Endothelial cell of umbilical vein (primary cell): ENCODE measurements at regions of chr19 and their contacts with region 1.

Region 1: GRCh38 chr19:12766051-12766521 is 9.3 kb downstream of the HOOK2 start:
- DNase-seq: peak; percentile 88
- H3K4me3 ChIP-seq: peak overlapping the region in 2 of 3 experiments; percentile 34 to 44
- H3K27ac ChIP-seq: no peak overlapping the region
- H3K4me1 ChIP-seq: no peaks in the 10 kb centered on the region
- H3K27me3 ChIP-seq: no peaks in the 10 kb centered on the region
- CTCF ChIP-seq: peak; percentile 32 to 95
- POLR2A ChIP-seq: no peak

Region 2: DNA sequence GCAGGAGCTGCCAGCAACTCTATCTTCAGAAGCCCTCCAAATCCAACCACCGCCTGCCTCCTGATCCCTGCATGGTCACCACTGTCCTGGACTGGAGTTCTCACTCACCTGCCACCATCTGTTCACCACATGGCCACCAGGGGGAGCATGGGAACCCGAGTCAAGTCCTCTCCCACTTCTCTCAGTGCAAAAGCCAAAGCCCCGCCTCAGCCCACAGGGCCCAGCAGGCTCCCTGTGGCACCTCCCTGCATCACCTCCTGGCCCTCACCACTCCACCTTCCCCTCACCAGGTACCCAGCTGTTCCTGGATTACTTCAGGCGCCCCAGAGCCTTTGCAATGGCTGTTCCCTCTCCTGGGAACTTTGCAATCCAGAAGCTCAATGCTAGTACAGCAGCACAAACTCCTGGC is 89.7 kb before region 1 on chr19:
- CTCF ChIA-PET with region 1: no interaction called
- POLR2A ChIA-PET with region 1: no interaction called
- dilution Hi-C with region 1: no loop called
- intact Hi-C with region 1: no loop called
- DNase-seq: peak; percentile 60
- H3K4me3 ChIP-seq: no peak overlapping the region
- H3K27ac ChIP-seq: no peak overlapping the region
- H3K4me1 ChIP-seq: no peaks in the 10 kb centered on the region
- H3K27me3 ChIP-seq: no peaks in the 10 kb centered on the region
- CTCF ChIP-seq: peak; percentile 85 to 90
- POLR2A ChIP-seq: no peak

Region 3: DNA sequence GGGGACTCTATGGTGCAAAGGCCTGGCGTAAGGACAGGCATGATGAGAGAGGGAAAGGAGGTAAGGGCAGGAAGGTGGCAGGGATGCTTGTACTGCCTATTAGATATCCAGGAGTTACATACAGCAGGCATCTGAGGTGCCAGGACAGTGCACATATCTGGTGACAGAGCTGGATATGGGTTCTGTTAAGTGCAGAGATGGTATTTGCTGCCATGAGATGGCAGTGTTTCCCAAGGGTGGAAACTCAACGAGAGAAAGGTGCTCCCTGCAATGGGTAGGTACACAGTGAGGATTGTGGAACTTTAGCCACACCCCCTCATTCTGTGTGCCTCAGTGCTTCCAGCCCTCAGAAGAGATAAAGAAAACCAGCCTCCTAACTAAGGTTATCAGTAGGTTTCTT is 49.2 kb before region 1 on chr19:
- CTCF ChIA-PET with region 1: interaction called, 19 read pairs
- POLR2A ChIA-PET with region 1: no interaction called
- dilution Hi-C with region 1: no loop called
- intact Hi-C with region 1: no loop called
- DNase-seq: peak; percentile 48
- H3K4me3 ChIP-seq: no peak overlapping the region
- H3K27ac ChIP-seq: no peak overlapping the region
- H3K4me1 ChIP-seq: peaks cover 6% of the 10 kb centered on the region
- H3K27me3 ChIP-seq: no peaks in the 10 kb centered on the region
- CTCF ChIP-seq: peak; percentile 21 to 51
- POLR2A ChIP-seq: no peak

Region 4: GRCh38 chr19:12736995-12737834 is 28.9 kb before region 1 on chr19 and contains the start of gene GET3:
- CTCF ChIA-PET with region 1: interaction called, 11 read pairs
- POLR2A ChIA-PET with region 1: no interaction called
- dilution Hi-C with region 1: no loop called
- intact Hi-C with region 1: no loop called
- DNase-seq: peak; percentile 100
- H3K4me3 ChIP-seq: peak within 1 kb of the TSS; percentile 64 to 99 (median 69)
- H3K27ac ChIP-seq: peak within 1 kb of the TSS; percentile 87
- H3K4me1 ChIP-seq: peaks cover 22% of the 10 kb centered on the region
- H3K27me3 ChIP-seq: no peaks in the 10 kb centered on the region
- CTCF ChIP-seq: no peak
- POLR2A ChIP-seq: peak; percentile 89
- total RNA-seq, gene GET3: 74.8 and 77.0 TPM in 2 replicates

Region 5: GRCh38 chr19:12796146-12797071 is 30.3 kb after region 1 on chr19:
- CTCF ChIA-PET with region 1: interaction called, 524 read pairs
- POLR2A ChIA-PET with region 1: interaction called, 13 read pairs
- dilution Hi-C with region 1: no loop called
- intact Hi-C with region 1: loop called (anchors 1 kb)
- DNase-seq: peak; percentile 80
- H3K4me3 ChIP-seq: no peak overlapping the region
- H3K27ac ChIP-seq: no peak overlapping the region
- H3K4me1 ChIP-seq: peaks cover 18% of the 10 kb centered on the region
- H3K27me3 ChIP-seq: no peaks in the 10 kb centered on the region
- CTCF ChIP-seq: peak; percentile 89 to 90
- POLR2A ChIP-seq: no peak

Region 6: DNA sequence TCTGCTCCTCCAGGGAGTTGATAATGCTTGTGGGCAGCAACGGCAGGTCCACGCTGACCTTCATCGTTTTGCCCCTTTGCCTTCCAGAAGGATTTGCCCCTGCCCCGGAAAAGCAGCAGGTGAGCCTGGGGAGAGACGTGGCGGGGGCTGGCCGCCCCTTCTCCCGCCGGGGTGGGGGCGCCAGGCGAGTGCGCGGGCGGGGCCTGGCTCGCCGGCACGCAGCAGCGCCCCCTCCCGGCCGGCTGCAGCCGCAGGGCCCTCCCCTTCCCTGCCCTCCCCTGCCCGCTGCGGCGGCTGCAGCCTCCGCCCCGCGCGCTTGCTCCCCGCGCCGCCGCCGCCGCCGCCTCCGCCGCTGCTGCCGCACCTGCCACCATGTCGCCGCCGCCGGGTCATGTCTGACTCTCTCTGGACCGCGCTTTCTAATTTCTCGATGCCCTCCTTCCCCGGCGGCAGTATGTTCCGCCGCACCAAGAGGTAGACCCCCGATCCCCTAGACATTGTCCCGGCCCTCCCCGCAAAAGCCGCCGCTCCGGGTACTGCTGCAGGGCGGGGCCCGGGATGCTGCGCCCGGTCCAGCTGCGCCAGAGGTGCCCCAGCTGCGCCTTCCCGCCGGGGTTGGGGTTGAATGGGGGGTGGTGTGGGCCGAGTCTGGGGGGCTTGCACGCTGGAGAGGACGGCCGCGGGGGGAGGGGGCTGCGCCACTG is 72.2 kb after region 1 on chr19 and contains the start of gene MAST1:
- CTCF ChIA-PET with region 1: interaction called, 18 read pairs
- POLR2A ChIA-PET with region 1: no interaction called
- dilution Hi-C with region 1: no loop called
- intact Hi-C with region 1: no loop called
- DNase-seq: no peak
- H3K4me3 ChIP-seq: peak within 1 kb of the TSS in 1 of 3 experiments; percentile 10
- H3K27ac ChIP-seq: no peak within 1 kb of the TSS
- H3K4me1 ChIP-seq: no peaks in the 10 kb centered on the region
- H3K27me3 ChIP-seq: peaks cover 55 to 66% of the 10 kb centered on the region in 2 experiments
- CTCF ChIP-seq: peak; percentile 40 to 60
- POLR2A ChIP-seq: no peak
- total RNA-seq, gene MAST1: 0.13 and 0.69 TPM in 2 replicates